ENCODE measurements at regions of chr5 and their contacts with region 1.

Region 1: GRCh38 chr5:65481635-65482295 is at the start of gene ADAMTS6:
- DNase-seq: peak; percentile 84 to 91
- ATAC-seq: peak; percentile 76
- total RNA-seq, gene ADAMTS6: 0.46 to 1.3 TPM

Region 2: GRCh38 chr5:64811050-64811640 is 670.6 kb before region 1 on chr5:
- intact Hi-C with region 1: loop called in 1 of 2 experiments (anchors 10 kb)
- DNase-seq: no peak
- ATAC-seq: peak; percentile 53

Region 3: DNA sequence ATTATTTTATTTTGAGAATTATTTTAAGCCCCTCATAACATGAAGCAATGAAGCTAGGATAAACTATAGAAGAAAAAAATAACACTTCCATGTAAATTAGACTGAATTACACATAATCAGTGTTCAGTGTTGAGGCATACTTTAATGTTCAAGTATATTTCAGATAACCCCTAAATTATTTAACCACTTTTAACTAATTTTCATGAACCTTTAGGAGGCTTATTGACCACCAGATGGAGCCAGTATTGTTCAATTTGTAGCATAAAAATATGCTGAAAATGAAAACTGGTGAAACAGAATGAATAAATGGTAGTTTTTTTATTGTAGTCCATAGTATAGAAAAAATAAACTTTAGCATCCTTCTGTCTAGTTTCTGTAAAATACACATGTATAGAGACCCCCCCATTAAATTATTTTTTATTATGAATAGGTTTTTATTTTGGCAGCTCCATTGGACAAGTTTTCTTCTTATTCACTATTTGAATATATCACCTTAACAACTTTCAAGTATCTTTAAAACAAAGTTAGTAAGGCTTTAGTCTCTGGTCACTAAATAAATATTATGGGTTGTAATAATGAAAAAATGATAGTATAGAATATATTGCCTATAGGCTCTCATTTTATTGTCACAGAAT is 522.9 kb before region 1 on chr5:
- intact Hi-C with region 1: loop called in 1 of 2 experiments (anchors 5 kb)
- DNase-seq: no peak
- ATAC-seq: no peak

Region 4: GRCh38 chr5:65102828-65103711 is 378.7 kb before region 1 on chr5:
- intact Hi-C with region 1: loop called in 1 of 2 experiments (anchors 5 kb)
- DNase-seq: peak; percentile 53 to 72
- ATAC-seq: peak; percentile 87